ENCODE measurements at regions of chr1 and their contacts with region 1.

Region 1: DNA sequence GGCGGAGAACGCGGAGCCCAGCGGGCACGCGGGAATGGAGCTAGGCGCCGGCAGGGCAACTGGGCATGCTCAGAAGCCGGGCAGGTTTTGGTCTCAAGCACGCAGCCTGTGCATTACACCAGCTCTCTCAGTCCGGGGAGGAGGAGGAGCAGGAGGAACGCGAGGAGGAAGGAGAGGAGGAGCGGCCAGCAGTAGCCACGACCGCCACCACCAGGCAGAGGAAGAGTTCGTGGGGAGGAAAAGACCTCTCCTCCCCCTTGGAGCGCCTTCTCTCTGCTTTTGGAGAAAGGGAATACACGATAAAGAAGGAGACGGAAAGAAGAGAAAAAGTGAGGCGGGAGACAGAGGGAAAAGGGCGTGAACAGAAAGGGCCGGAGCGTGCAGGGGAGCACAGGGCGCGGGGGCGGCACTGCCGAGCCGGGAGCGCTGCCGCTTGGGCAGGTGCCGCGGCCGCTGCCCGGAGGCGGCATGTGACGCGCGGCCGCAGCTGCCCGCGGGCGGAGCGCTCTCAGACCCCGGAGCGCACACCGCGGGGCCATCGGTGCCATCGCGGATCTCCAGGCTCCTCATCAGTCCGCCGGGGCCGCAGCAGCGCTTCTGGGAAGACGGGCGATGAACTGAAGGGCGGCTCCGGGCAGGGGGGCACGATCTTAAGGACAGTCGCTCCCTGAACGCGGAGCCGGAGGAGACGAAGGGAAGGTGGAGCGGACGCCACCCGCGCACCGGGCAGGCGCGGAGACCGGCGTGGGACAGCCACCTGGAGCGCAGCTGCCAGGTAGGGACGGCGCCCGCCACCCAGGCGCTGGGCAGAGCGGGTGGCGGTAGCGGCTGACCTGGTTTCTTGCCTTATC is at the start of gene CHRM3:
- DNase-seq: peak; percentile 91
- H3K4me3 Mint-ChIP-seq: peak within 1 kb of the TSS; percentile 75
- H3K27ac Mint-ChIP-seq: peak within 1 kb of the TSS; percentile 52
- H3K4me1 Mint-ChIP-seq: peaks cover 10% of the 10 kb centered on the region
- H3K27me3 Mint-ChIP-seq: peaks cover 24% of the 10 kb centered on the region
- CTCF ChIP-seq: peak; percentile 36
- total RNA-seq, gene CHRM3: 2.3 and 2.6 TPM in 2 replicates

Region 2: DNA sequence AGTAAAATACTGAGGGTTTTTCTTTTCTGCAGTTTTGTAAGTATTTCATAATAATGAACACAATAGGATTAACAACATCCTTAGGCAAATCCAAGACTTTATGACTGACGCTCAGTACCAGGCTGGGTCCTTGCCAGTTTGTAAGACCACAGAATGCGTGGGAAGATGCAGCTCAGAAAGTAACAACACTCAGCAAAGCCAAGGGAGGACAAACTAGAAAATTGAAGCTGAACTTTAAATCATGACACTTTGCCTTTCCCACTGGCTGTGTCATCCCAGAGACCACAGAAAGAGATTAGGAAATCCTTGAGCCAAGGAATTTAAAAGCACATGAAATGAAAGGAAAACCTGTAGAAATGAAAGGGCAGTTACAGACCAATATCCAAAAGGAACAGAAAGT is 426.6 kb before region 1 on chr1:
- CTCF ChIA-PET with region 1: no interaction called
- intact Hi-C with region 1: loop called (anchors 5 kb)
- DNase-seq: no peak
- H3K4me3 Mint-ChIP-seq: peak overlapping the region; percentile 33
- H3K27ac Mint-ChIP-seq: peak overlapping the region; percentile 17
- H3K4me1 Mint-ChIP-seq: peaks cover 38% of the 10 kb centered on the region
- H3K27me3 Mint-ChIP-seq: no peaks in the 10 kb centered on the region
- CTCF ChIP-seq: no peak

Region 3: GRCh38 chr1:239212811-239213220 is 173.9 kb before region 1 on chr1:
- CTCF ChIA-PET with region 1: interaction called, 3 read pairs
- intact Hi-C with region 1: loop called (anchors 5 kb)
- DNase-seq: peak; percentile 80
- H3K4me3 Mint-ChIP-seq: peak overlapping the region; percentile 43
- H3K27ac Mint-ChIP-seq: peak overlapping the region; percentile 79
- H3K4me1 Mint-ChIP-seq: peaks cover 25% of the 10 kb centered on the region
- H3K27me3 Mint-ChIP-seq: no peaks in the 10 kb centered on the region
- CTCF ChIP-seq: no peak

Region 4: DNA sequence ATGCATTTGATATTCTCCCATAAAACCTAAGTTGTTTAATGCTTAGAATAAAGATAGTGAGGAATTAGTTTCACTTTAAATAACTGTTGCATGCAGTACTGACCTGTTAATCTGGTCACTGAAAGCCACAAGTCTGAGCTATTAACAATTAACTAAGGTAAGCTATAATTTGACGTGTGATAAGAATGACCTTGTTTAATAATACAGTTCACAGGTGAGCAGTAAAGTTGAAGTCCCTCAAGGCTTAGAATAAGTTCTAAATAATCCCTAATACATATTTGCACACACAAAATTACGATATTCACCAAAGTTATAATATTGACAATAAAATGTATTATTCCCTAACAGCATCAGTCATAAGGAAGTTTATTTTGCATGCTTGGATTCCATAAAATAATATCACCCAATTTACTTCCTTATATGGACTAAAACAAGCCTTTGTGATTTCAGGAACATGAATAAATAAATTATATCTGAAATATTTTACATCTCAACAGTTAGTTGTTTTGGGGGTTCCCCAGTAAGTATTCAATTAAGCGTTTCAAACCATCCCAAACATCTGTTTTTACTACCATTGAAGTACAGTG is 71.0 kb before region 1 on chr1:
- CTCF ChIA-PET with region 1: interaction called, 4 read pairs
- intact Hi-C with region 1: loop called (anchors 2 kb)
- DNase-seq: no peak
- H3K4me3 Mint-ChIP-seq: peak overlapping the region; percentile 63
- H3K27ac Mint-ChIP-seq: peak overlapping the region; percentile 50
- H3K4me1 Mint-ChIP-seq: no peaks in the 10 kb centered on the region
- H3K27me3 Mint-ChIP-seq: no peaks in the 10 kb centered on the region
- CTCF ChIP-seq: no peak

Region 5: GRCh38 chr1:239368436-239369109 is 18.1 kb before region 1 on chr1:
- CTCF ChIA-PET with region 1: no interaction called
- intact Hi-C with region 1: no loop called
- DNase-seq: peak; percentile 6
- H3K4me3 Mint-ChIP-seq: no peak overlapping the region
- H3K27ac Mint-ChIP-seq: no peak overlapping the region
- H3K4me1 Mint-ChIP-seq: peaks cover 10% of the 10 kb centered on the region
- H3K27me3 Mint-ChIP-seq: no peaks in the 10 kb centered on the region
- CTCF ChIP-seq: no peak

Measured in Calu3 (cell line).